ENCODE measurements at regions of chr1 and their contacts with region 1.

Region 1: GRCh38 chr1:161389691-161390558 is 22.2 kb upstream of the CFAP126 start:
- DNase-seq: peak; percentile 84 to 98 (median 93)
- ATAC-seq: peak; percentile 90 to 97 (median 94)
- H3K4me3 ChIP-seq: peak overlapping the region; percentile 84 to 88
- H3K4me3 Mint-ChIP-seq: peak overlapping the region; percentile 86 to 91 (median 89)
- H3K27ac ChIP-seq: peak overlapping the region; percentile 87
- H3K27ac Mint-ChIP-seq: peak overlapping the region; percentile 86 to 93
- H3K4me1 ChIP-seq: peaks cover 12 to 24% of the 10 kb centered on the region in 2 experiments
- H3K4me1 Mint-ChIP-seq: peaks cover 36 to 37% (median 37%) of the 10 kb centered on the region in 3 donors
- H3K27me3 ChIP-seq: no peaks in the 10 kb centered on the region
- H3K27me3 Mint-ChIP-seq: no peaks in the 10 kb centered on the region

Region 2: GRCh38 chr1:161209790-161210409 is 180.0 kb before region 1 on chr1:
- CTCF ChIA-PET with region 1: interaction called, 3 to 4 read pairs
- POLR2A ChIA-PET with region 1: interaction called in 1 of 2 experiments, 10 read pairs
- DNase-seq: peak in 34 of 35 experiments; percentile 49 to 82 (median 69)
- ATAC-seq: peak; percentile 90 to 98 (median 90)
- H3K4me3 ChIP-seq: no peak overlapping the region
- H3K4me3 Mint-ChIP-seq: no peak overlapping the region
- H3K27ac ChIP-seq: no peak overlapping the region
- H3K27ac Mint-ChIP-seq: peak overlapping the region; percentile 71 to 84
- H3K4me1 ChIP-seq: peaks cover 3 to 19% of the 10 kb centered on the region in 2 experiments
- H3K4me1 Mint-ChIP-seq: peaks cover 34 to 40% (median 38%) of the 10 kb centered on the region in 3 donors
- H3K27me3 ChIP-seq: no peaks in the 10 kb centered on the region
- H3K27me3 Mint-ChIP-seq: no peaks in the 10 kb centered on the region

Region 3: GRCh38 chr1:161402446-161402845 is 12.5 kb after region 1 on chr1:
- CTCF ChIA-PET with region 1: no interaction called
- POLR2A ChIA-PET with region 1: no interaction called
- DNase-seq: no peak
- ATAC-seq: no peak
- H3K4me3 ChIP-seq: no peak overlapping the region
- H3K4me3 Mint-ChIP-seq: no peak overlapping the region
- H3K27ac ChIP-seq: no peak overlapping the region
- H3K27ac Mint-ChIP-seq: no peak overlapping the region
- H3K4me1 ChIP-seq: peaks cover 0 to 23% of the 10 kb centered on the region in 2 experiments
- H3K4me1 Mint-ChIP-seq: peaks cover 40 to 45% (median 43%) of the 10 kb centered on the region in 3 donors
- H3K27me3 ChIP-seq: no peaks in the 10 kb centered on the region
- H3K27me3 Mint-ChIP-seq: peaks cover 6 to 8% of the 10 kb centered on the region in 2 donors